ENCODE measurements at regions of chr5 and their contacts with region 1.

Region 1: GRCh38 chr5:141878711-141879425 is 658 bp upstream of the PCDH1 start:
- DNase-seq: peak; percentile 74
- H3K4me3 ChIP-seq: peak overlapping the region; percentile 55 to 63
- H3K27ac ChIP-seq: no peak overlapping the region; a peak in 1 of 4 replicates
- H3K4me1 ChIP-seq: peaks cover 4 to 69% of the 10 kb centered on the region in 2 experiments; a peak in 2 of 4 replicates
- H3K27me3 ChIP-seq: peaks cover 78% of the 10 kb centered on the region
- CTCF ChIP-seq: peak; percentile 96
- EP300 ChIP-seq: no peak
- RAD21 ChIP-seq: peak; percentile 95

Region 2: DNA sequence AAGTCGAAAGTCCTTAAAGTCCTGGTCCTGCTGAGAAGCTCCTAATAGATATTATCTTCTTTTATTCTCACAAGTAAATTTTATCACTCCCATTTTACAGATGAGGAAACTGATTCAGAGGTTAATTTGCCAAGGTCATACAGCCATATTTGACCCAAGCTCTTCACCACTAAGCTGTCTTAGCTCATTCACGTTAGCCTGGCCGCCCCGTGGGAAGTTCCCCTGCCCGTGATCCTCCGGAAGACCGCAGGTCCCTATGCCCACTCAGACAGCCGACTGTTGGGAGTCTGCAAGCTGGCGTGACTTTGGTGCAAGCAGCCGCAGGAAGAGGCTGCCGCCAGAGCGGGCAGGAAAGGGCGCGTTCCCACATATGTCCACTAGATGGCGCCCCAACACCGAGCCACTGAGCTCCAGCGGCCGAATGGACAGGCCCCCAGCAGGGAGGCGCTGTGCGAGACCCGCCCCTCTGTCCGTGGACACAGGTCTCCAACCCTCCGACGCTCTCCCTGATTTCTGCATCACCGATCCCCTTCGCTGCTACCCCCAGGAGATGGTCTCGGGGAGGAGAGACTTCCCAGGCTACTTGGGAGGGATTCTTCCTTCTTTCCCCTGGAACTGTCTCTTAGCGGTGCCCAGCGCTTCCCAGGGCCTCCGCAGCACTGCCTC is 186.9 kb before region 1 on chr5:
- CTCF ChIA-PET with region 1: interaction called, 451 read pairs
- POLR2A ChIA-PET with region 1: interaction called, 4 read pairs
- DNase-seq: peak; percentile 92
- H3K4me3 ChIP-seq: peak overlapping the region; percentile 40 to 54
- H3K27ac ChIP-seq: no peak overlapping the region
- H3K4me1 ChIP-seq: peaks cover 0 to 23% of the 10 kb centered on the region in 2 experiments; a peak in 2 of 4 replicates
- H3K27me3 ChIP-seq: peaks cover 28% of the 10 kb centered on the region
- CTCF ChIP-seq: peak; percentile 91
- EP300 ChIP-seq: no peak
- RAD21 ChIP-seq: peak; percentile 96

Region 3: DNA sequence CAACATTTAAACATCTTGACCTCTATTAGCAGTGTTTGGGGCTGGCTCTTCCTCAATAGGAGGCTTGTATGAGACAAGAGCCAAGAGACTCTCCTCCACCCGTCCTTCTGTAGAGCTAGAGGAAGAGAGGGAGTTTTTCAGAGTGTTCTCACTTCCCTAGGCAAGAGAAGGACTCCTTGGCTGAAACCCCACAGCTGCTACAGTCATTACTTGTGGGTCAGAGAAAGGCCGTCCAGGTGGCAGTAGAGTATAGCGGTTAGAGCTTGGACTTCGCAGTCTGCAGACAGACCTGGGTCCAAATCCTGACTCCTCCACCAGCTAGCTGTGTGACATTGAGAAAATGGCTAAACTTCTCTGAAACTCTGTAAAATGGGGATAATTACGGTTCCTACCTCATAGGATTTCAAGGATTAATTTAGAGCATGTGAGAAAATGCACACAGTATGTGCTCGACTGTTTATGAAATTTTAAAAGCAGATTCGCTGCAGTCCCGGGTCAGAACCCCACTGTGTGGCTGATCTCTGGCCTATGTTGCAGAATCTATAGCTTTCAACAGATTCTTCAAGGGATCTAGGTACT is 116.0 kb before region 1 on chr5:
- CTCF ChIA-PET with region 1: interaction called, 19 read pairs
- POLR2A ChIA-PET with region 1: no interaction called
- DNase-seq: no peak
- H3K4me3 ChIP-seq: no peak overlapping the region
- H3K27ac ChIP-seq: no peak overlapping the region
- H3K4me1 ChIP-seq: peaks cover 0 to 6% of the 10 kb centered on the region in 2 experiments; a peak in 1 of 4 replicates
- H3K27me3 ChIP-seq: peaks cover 9% of the 10 kb centered on the region
- CTCF ChIP-seq: no peak
- EP300 ChIP-seq: no peak
- RAD21 ChIP-seq: no peak

Region 4: GRCh38 chr5:141846031-141846430 is 32.8 kb before region 1 on chr5:
- CTCF ChIA-PET with region 1: interaction called, 162 read pairs
- POLR2A ChIA-PET with region 1: interaction called, 7 read pairs
- DNase-seq: peak; percentile 82
- H3K4me3 ChIP-seq: no peak overlapping the region; a peak in 1 of 4 replicates
- H3K27ac ChIP-seq: peak overlapping the region in 1 of 2 experiments; percentile 80; a peak in 2 of 4 replicates
- H3K4me1 ChIP-seq: peaks cover 8 to 64% of the 10 kb centered on the region in 2 experiments; a peak in 3 of 4 replicates
- H3K27me3 ChIP-seq: peaks cover 2% of the 10 kb centered on the region; the same call in 1 of the 2 replicates
- CTCF ChIP-seq: no peak
- EP300 ChIP-seq: no peak; a peak in 1 of 4 replicates
- RAD21 ChIP-seq: no peak

Region 5: DNA sequence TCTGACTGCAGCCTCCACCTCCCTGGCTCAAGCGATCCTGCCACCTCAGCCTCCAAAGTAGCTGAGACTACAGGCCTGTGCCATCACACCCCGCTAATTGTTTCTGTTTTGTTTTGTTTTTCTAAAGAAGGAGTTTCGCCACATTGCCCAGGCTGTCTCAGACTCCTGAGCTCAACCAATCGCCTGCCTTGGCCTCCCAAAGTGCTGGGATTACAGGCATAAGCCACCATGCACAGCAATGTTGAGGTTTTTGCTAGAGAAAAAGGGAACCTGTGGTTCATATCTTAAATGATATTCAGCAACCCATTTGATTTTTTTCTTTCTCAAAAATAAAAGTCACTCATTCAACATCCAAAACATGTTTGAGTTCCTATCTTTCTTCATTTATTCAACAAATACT is 24.4 kb after region 1 on chr5:
- CTCF ChIA-PET with region 1: interaction called, 15 read pairs
- POLR2A ChIA-PET with region 1: no interaction called
- DNase-seq: no peak
- H3K4me3 ChIP-seq: no peak overlapping the region
- H3K27ac ChIP-seq: no peak overlapping the region
- H3K4me1 ChIP-seq: peaks cover 0 to 12% of the 10 kb centered on the region in 2 experiments; a peak in 1 of 4 replicates
- H3K27me3 ChIP-seq: peaks cover 11% of the 10 kb centered on the region
- CTCF ChIP-seq: no peak
- EP300 ChIP-seq: no peak
- RAD21 ChIP-seq: no peak

Region 6: GRCh38 chr5:141968914-141969608 is 90.2 kb after region 1 on chr5 and contains the start of gene RNF14:
- CTCF ChIA-PET with region 1: interaction called, 35 read pairs
- POLR2A ChIA-PET with region 1: no interaction called
- DNase-seq: peak; percentile 97
- H3K4me3 ChIP-seq: peak within 1 kb of the TSS; percentile 81 to 85
- H3K27ac ChIP-seq: peak within 1 kb of the TSS; percentile 84 to 90
- H3K4me1 ChIP-seq: peaks cover 7 to 13% of the 10 kb centered on the region in 2 experiments; a peak in 3 of 4 replicates
- H3K27me3 ChIP-seq: no peaks in the 10 kb centered on the region
- CTCF ChIP-seq: peak; percentile 79
- EP300 ChIP-seq: no peak
- RAD21 ChIP-seq: no peak
- polyA plus RNA-seq, gene RNF14: 24.5 and 26.3 TPM in 2 replicates